A549 (cell line): ENCODE measurements at regions of chr4 and their contacts with region 1.

Region 1: GRCh38 chr4:8607603-8608481 is 15.3 kb downstream of the CPZ start:
- DNase-seq: peak in 1 of 2 experiments; percentile 50
- ATAC-seq: peak; percentile 50 to 82; a peak in 3 of 6 replicates
- H3K4me3 ChIP-seq: no peak overlapping the region
- H3K27ac ChIP-seq: no peak overlapping the region
- H3K4me1 ChIP-seq: no peaks in the 10 kb centered on the region
- CTCF ChIP-seq: peak; percentile 66
- EP300 ChIP-seq: no peak
- POLR2A ChIP-seq: no peak
- RAD21 ChIP-seq: peak; percentile 54 to 72

Region 2: DNA sequence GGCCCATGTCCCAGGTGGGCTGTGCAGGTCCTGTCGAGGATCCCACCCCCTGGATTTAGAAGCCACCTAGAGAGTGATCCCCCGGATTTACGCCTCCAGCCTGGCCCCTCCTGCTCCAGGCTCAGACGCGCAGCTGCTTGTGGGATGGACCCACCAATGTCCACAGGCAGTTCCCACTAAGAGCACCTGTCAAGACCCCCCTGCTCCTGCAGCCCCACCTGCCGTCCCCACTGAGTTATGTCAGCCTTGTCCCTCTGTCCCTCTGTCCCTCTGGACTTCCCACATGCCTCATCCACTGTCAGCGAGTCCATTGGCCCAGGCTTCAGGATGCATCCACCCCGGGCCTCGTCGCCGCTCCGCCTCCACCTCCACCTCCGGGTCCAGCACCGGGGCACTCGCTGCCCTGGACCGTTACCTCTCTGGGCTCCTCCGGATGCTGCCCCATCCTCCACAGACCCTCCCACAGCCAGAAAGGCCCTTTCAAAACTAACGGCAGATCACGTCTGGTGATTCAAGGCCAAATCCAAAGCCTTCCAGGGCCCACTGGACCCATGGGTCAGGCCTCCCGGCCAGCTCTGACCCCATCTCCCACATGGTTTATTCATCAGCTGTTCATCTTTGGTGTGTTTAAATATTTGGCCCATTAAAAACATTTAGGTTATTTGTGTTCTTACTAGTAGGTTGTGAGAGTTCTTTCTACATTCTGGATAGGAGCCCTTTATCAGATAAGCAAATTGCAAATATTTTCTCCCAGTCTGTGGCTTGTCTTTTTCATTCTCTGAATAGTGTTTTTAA is 310.0 kb before region 1 on chr4:
- CTCF ChIA-PET with region 1: no interaction called
- POLR2A ChIA-PET with region 1: no interaction called
- DNase-seq: no peak
- ATAC-seq: no peak
- H3K4me3 ChIP-seq: no peak overlapping the region
- H3K27ac ChIP-seq: no peak overlapping the region
- H3K4me1 ChIP-seq: no peaks in the 10 kb centered on the region
- CTCF ChIP-seq: no peak
- EP300 ChIP-seq: no peak
- POLR2A ChIP-seq: no peak
- RAD21 ChIP-seq: no peak

Region 3: GRCh38 chr4:8581094-8581881 is 26.6 kb before region 1 on chr4:
- CTCF ChIA-PET with region 1: interaction called, 12 read pairs
- POLR2A ChIA-PET with region 1: no interaction called
- DNase-seq: no peak
- ATAC-seq: peak in 1 of 2 experiments; percentile 7; a peak in 1 of 6 replicates
- H3K4me3 ChIP-seq: no peak overlapping the region
- H3K27ac ChIP-seq: no peak overlapping the region
- H3K4me1 ChIP-seq: no peaks in the 10 kb centered on the region
- CTCF ChIP-seq: no peak
- EP300 ChIP-seq: no peak
- POLR2A ChIP-seq: no peak
- RAD21 ChIP-seq: no peak

Region 4: DNA sequence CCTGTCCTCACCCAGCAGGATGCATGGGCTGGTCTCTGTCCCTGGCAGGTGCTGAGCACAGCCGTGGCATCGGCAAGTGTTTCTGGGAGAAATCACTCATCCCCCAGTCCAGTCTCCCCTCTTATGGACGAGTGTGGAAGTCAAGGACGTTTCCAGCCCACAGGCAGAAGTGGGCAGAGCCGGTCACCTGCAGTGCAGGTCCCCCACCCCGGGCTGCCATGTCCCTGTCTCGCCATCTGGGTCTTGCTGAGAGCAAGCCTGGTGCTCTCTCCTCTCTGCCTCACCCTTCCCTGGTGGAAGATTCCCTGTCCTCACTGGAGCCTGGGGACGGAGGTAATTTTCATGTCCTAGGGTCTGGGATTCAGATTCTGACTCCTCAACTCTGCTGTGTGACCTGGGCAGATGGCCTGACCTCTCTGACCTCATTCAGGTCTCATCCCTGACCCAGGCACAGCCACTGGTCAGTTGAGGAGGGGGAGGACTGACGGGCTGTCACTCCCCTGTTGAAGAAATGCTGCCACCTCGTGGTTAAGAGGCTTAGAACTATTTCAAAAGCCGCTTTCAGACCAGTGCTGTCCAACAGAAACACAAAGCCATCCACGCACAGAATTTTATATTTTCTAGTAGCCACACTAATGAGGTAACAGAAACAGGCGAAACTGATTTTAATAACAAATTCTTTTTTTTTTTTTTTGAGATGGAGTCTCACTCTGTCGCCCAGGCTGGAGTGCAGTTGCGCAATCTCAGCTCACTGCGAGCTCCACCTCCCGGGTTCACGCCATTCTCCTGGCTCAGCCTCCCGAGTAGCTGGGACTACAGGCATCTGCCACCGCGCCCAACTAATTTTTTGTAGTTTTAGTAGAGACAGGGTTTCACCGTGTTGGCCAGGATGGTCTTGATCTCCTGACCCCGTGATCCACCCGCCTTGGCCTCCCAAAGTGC is 13.5 kb before region 1 on chr4:
- CTCF ChIA-PET with region 1: interaction called, 13 read pairs
- POLR2A ChIA-PET with region 1: no interaction called
- DNase-seq: peak; percentile 70 to 77
- ATAC-seq: peak; percentile 51 to 83; a peak in 5 of 6 replicates
- H3K4me3 ChIP-seq: no peak overlapping the region
- H3K27ac ChIP-seq: no peak overlapping the region
- H3K4me1 ChIP-seq: no peaks in the 10 kb centered on the region
- CTCF ChIP-seq: peak; percentile 70
- EP300 ChIP-seq: no peak
- POLR2A ChIP-seq: no peak
- RAD21 ChIP-seq: peak; percentile 72 to 75